ENCODE measurements at regions of chr4 and their contacts with region 1.

Region 1: DNA sequence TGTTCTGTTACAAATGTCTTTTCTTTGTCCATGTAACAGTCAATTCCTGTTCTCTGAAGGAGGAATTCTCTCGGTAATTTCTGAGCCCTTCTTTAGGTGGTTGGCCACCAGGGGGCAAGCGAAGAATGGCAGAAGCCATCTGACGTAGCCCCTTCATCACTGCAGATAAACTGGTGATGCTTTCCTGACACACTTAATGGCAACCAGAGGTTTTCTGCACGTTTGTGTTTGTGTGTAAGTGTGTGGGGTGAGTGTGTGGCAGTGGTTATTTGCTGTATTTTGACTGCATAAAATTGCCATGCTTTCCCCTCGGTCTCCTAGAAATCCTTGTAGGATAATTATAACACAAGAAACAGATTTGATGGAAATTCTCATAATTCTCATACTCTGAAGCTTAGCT is 64.8 kb upstream of the STOX2 start:
- DNase-seq: peak; percentile 82 to 84
- H3K4me3 ChIP-seq: no peak overlapping the region
- H3K27ac ChIP-seq: no peak overlapping the region
- H3K4me1 ChIP-seq: peaks cover 0 to 9% (median 0%) of the 10 kb centered on the region in 4 donors
- H3K27me3 ChIP-seq: peaks cover 0 to 6% of the 10 kb centered on the region in 2 donors
- CTCF ChIP-seq: peak; percentile 79 to 83

Region 2: DNA sequence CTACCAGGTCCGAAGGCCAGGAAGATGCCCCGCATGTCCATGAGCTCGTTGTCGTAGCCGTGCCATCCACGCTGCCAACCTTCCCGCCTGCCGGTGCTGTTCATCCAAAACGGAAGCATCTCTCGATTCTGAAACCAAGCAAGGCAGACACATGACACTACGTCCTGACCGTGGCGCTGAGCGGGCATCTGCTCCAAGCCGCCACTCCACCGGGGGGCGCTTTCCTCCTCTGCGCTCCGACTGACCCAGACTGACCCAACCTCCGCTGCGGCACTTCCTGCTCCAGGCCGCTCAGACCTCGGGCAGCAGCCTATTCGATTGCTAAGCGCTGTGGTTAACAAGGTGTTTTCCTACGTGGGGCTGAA is 256.9 kb after region 1 on chr4:
- intact Hi-C with region 1: loop called (anchors 10 kb)
- DNase-seq: peak in 1 of 2 donors; percentile 31
- H3K4me3 ChIP-seq: peak overlapping the region; percentile 23 to 38
- H3K27ac ChIP-seq: no peak overlapping the region
- H3K4me1 ChIP-seq: no peaks in the 10 kb centered on the region
- H3K27me3 ChIP-seq: no peaks in the 10 kb centered on the region
- CTCF ChIP-seq: peak in 1 of 2 experiments; percentile 8

Region 3: GRCh38 chr4:184167576-184167975 is 327.3 kb after region 1 on chr4:
- intact Hi-C with region 1: loop called (anchors 2 kb)
- DNase-seq: no peak
- H3K4me3 ChIP-seq: no peak overlapping the region
- H3K27ac ChIP-seq: no peak overlapping the region
- H3K4me1 ChIP-seq: peaks cover 0 to 11% (median 6%) of the 10 kb centered on the region in 4 donors
- H3K27me3 ChIP-seq: peaks cover 0 to 36% of the 10 kb centered on the region in 2 donors
- CTCF ChIP-seq: no peak